Activated naive CD4-positive, alpha-beta T cell treated with anti-CD3 and anti-CD28 coated beads for 36 hours (primary cell): ENCODE measurements at regions of chr3 and their contacts with region 1.

Region 1: GRCh38 chr3:180959691-180960090 is 29.8 kb downstream of the DNAJC19 start:
- DNase-seq: no peak
- H3K4me3 Mint-ChIP-seq: no peak overlapping the region
- H3K27ac Mint-ChIP-seq: peak overlapping the region; percentile 32
- H3K4me1 Mint-ChIP-seq: peaks cover 26% of the 10 kb centered on the region
- H3K27me3 Mint-ChIP-seq: no peaks in the 10 kb centered on the region

Region 2: DNA sequence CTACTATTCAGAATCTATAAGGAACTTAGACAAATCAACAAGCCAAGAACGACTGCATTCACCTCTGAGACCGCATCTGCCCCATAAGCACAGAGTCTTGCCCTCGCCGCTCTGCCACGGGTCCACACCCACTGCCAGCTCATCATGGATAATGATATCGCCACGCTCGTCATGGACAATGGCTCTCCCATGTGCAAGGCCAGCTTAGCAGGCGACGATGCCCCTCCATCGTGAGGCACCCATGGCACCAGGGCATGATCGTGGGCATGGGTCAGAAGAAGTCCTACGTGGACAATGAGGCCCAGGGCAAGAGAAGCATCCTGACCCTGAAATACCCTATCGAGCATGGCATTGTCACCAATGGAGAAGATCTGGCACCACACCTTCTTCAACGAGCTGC is 139.3 kb before region 1 on chr3:
- CTCF ChIA-PET with region 1: no interaction called
- intact Hi-C with region 1: no loop called
- DNase-seq: no peak
- H3K4me3 Mint-ChIP-seq: no peak overlapping the region
- H3K27ac Mint-ChIP-seq: no peak overlapping the region
- H3K4me1 Mint-ChIP-seq: no peaks in the 10 kb centered on the region
- H3K27me3 Mint-ChIP-seq: peaks cover 3% of the 10 kb centered on the region

Region 3: GRCh38 chr3:180898572-180898971 is 61.1 kb before region 1 on chr3:
- CTCF ChIA-PET with region 1: no interaction called
- intact Hi-C with region 1: no loop called
- DNase-seq: no peak
- H3K4me3 Mint-ChIP-seq: no peak overlapping the region
- H3K27ac Mint-ChIP-seq: no peak overlapping the region
- H3K4me1 Mint-ChIP-seq: no peaks in the 10 kb centered on the region
- H3K27me3 Mint-ChIP-seq: no peaks in the 10 kb centered on the region

Region 4: GRCh38 chr3:180934638-180935037 is 25.1 kb before region 1 on chr3:
- CTCF ChIA-PET with region 1: no interaction called
- intact Hi-C with region 1: loop called (anchors 2 kb)
- DNase-seq: no peak
- H3K4me3 Mint-ChIP-seq: no peak overlapping the region
- H3K27ac Mint-ChIP-seq: no peak overlapping the region
- H3K4me1 Mint-ChIP-seq: peaks cover 33% of the 10 kb centered on the region
- H3K27me3 Mint-ChIP-seq: no peaks in the 10 kb centered on the region

Region 5: GRCh38 chr3:180973543-180973942 is 13.9 kb after region 1 on chr3:
- CTCF ChIA-PET with region 1: no interaction called
- intact Hi-C with region 1: loop called (anchors 2 kb)
- DNase-seq: no peak
- H3K4me3 Mint-ChIP-seq: no peak overlapping the region
- H3K27ac Mint-ChIP-seq: no peak overlapping the region
- H3K4me1 Mint-ChIP-seq: peaks cover 11% of the 10 kb centered on the region
- H3K27me3 Mint-ChIP-seq: no peaks in the 10 kb centered on the region

Region 6: GRCh38 chr3:180989291-180990163 is 29.8 kb after region 1 on chr3 and contains the start of gene DNAJC19:
- CTCF ChIA-PET with region 1: no interaction called
- intact Hi-C with region 1: loop called (anchors 2 kb)
- DNase-seq: peak; percentile 94
- H3K4me3 Mint-ChIP-seq: peak within 1 kb of the TSS; percentile 85
- H3K27ac Mint-ChIP-seq: peak within 1 kb of the TSS; percentile 87
- H3K4me1 Mint-ChIP-seq: peaks cover 26% of the 10 kb centered on the region
- H3K27me3 Mint-ChIP-seq: no peaks in the 10 kb centered on the region
- total RNA-seq, gene DNAJC19: 72.2 to 73.8 TPM

Region 7: GRCh38 chr3:181017690-181018089 is 58.0 kb after region 1 on chr3:
- CTCF ChIA-PET with region 1: no interaction called
- intact Hi-C with region 1: no loop called
- DNase-seq: no peak
- H3K4me3 Mint-ChIP-seq: no peak overlapping the region
- H3K27ac Mint-ChIP-seq: no peak overlapping the region
- H3K4me1 Mint-ChIP-seq: no peaks in the 10 kb centered on the region
- H3K27me3 Mint-ChIP-seq: peaks cover 12% of the 10 kb centered on the region